Naive thymus-derived CD8-positive, alpha-beta T cell (primary cell): ENCODE measurements at regions of chr16 and their contacts with region 1.

Region 1: DNA sequence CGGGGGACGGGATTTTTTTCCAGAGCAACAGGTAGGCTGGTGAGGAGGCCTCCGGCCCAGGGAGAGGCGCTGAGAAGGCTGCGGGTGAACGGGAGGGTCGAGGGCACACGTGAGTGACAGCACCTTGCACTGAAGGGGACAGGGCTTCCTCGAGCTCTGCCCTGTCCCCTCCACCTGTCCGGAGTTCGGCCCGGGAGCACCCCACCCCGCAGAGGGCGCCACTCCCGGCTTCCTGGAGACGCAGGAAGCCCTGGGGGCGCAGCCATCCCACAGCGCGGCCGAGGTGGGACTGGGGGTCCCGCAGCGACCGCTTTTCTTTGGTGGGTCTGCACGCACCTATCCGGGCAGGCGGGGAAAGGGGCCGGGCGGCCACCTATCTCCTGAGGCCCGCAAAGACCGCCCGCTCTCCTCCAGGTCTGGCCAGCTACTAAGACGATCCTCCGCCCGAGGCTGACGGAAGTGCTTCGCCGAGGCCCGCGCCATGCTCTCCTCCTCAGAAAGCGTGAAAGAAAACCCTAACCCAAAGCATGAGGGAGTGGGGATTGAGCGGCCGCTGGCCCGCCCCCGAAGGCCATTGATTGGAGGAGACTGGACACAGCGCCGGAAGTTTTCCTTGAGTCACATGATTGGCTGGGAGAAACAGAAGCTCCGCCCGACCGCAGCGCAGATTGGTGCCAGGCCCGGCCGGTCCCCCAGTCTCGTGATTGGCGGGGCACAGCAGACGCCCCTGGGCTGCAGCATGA is 34.3 kb downstream of the DDX19A start:
- DNase-seq: peak; percentile 90 to 97 (median 94)
- ATAC-seq: peak; percentile 88 to 92
- H3K4me3 Mint-ChIP-seq: peak overlapping the region; percentile 91 to 99 (median 95)
- H3K27ac Mint-ChIP-seq: peak overlapping the region; percentile 79 to 98 (median 94)
- H3K4me1 Mint-ChIP-seq: peaks cover 6 to 26% (median 18%) of the 10 kb centered on the region in 4 donors
- H3K27me3 Mint-ChIP-seq: no peaks in the 10 kb centered on the region

Region 2: GRCh38 chr16:70269471-70269870 is 111.6 kb before region 1 on chr16:
- POLR2A ChIA-PET with region 1: no interaction called
- DNase-seq: no peak
- ATAC-seq: no peak
- H3K4me3 Mint-ChIP-seq: no peak overlapping the region
- H3K27ac Mint-ChIP-seq: peak overlapping the region in 1 of 10 donors; percentile 59
- H3K4me1 Mint-ChIP-seq: peaks cover 0 to 3% (median under 1%) of the 10 kb centered on the region in 4 donors
- H3K27me3 Mint-ChIP-seq: no peaks in the 10 kb centered on the region

Region 3: DNA sequence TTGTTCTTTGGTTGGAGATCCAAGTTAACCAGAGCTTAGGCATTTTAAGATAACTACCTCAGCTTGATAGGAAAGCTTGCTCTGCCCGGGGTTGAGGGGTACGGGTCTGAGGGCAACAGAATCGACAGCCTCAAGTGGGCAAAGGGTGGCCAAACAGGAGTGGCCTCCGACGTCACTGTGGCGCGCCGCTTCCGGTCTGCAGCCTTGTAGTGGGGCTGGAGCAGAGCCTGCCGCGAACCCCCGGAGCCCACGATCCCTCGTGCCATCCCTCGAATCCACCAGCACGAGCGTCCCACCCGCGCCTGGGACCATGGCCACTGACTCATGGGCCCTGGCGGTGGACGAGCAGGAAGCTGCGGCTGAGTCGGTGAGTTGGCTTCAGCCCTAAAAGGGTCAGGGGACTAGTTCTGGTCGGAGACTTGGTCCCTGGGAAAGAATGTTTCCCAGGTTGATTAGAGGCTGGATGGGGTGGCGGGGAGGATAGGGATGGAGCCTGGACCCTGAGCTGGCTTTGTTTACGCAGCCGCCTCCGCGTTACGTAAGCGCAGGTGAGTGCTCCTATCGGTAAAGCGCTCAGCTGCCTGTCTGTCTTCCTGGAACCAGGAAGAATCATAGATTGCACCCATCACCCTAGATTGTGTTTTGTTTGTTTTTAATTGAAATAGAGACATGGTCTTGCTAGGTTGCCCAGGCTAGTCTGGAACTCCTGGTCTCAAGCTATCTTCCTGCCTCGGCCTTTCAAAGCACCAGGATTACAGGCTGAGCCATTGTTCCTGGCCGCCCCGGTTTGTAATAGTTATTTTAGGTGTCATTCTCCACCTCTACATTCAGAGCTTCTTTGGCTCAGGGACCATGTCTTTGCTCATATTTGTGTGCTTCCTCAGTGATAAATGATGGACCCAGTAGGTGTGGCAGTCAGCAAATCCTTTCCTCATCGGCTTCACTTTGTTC is 81.8 kb before region 1 on chr16 and contains the start of gene DDX19B:
- POLR2A ChIA-PET with region 1: interaction called, 13 read pairs
- DNase-seq: peak; percentile 33 to 76 (median 52)
- ATAC-seq: peak; percentile 86 to 91
- H3K4me3 Mint-ChIP-seq: peak within 1 kb of the TSS; percentile 89 to 98 (median 94)
- H3K27ac Mint-ChIP-seq: peak within 1 kb of the TSS; percentile 97 to 100 (median 99)
- H3K4me1 Mint-ChIP-seq: peaks cover 17 to 45% (median 42%) of the 10 kb centered on the region in 4 donors
- H3K27me3 Mint-ChIP-seq: no peaks in the 10 kb centered on the region
- polyA plus RNA-seq, gene DDX19B: 34.5 to 48.2 (median 40.0) TPM

Region 4: DNA sequence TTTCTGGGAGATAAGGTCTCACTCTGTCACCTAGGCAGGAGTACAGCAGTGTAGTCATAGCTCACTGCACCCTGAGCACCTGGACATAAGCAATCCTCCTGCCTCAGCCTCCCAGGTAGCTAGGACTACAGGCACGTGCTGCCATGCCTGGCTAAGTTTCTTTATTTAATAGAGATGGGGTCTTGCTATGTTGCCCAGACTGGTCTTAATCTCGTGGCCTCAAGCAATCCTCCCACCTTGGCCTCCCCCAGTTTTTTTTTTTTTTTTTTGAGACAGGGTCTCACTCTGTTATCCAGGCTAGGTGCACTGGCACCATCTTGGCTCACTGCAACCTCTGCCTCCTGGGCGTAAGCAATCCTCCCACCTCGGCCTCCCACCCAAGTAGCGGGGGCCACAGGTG is 60.9 kb before region 1 on chr16:
- POLR2A ChIA-PET with region 1: no interaction called
- DNase-seq: no peak
- ATAC-seq: no peak
- H3K4me3 Mint-ChIP-seq: no peak overlapping the region
- H3K27ac Mint-ChIP-seq: no peak overlapping the region
- H3K4me1 Mint-ChIP-seq: no peaks in the 10 kb centered on the region
- H3K27me3 Mint-ChIP-seq: no peaks in the 10 kb centered on the region

Region 5: GRCh38 chr16:70370924-70371323 is 10.1 kb before region 1 on chr16:
- POLR2A ChIA-PET with region 1: interaction called, 23 read pairs
- DNase-seq: no peak
- ATAC-seq: no peak
- H3K4me3 Mint-ChIP-seq: peak overlapping the region in 1 of 10 donors; percentile 7
- H3K27ac Mint-ChIP-seq: peak overlapping the region in 8 of 10 donors; percentile 34 to 89 (median 66)
- H3K4me1 Mint-ChIP-seq: peaks cover 4 to 34% (median 7%) of the 10 kb centered on the region in 4 donors
- H3K27me3 Mint-ChIP-seq: no peaks in the 10 kb centered on the region

Region 6: GRCh38 chr16:70416748-70417616 is 36.0 kb after region 1 on chr16:
- POLR2A ChIA-PET with region 1: interaction called, 22 read pairs
- DNase-seq: no peak
- ATAC-seq: no peak
- H3K4me3 Mint-ChIP-seq: peak overlapping the region in 8 of 10 donors; percentile 42 to 79 (median 64)
- H3K27ac Mint-ChIP-seq: peak overlapping the region; percentile 83 to 95 (median 91)
- H3K4me1 Mint-ChIP-seq: peaks cover 29 to 65% (median 60%) of the 10 kb centered on the region in 4 donors
- H3K27me3 Mint-ChIP-seq: no peaks in the 10 kb centered on the region

Region 7: GRCh38 chr16:70438969-70439862 is 58.2 kb after region 1 on chr16 and contains the start of gene ST3GAL2:
- POLR2A ChIA-PET with region 1: interaction called, 67 read pairs
- DNase-seq: peak; percentile 87 to 97 (median 91)
- ATAC-seq: peak; percentile 91 to 95
- H3K4me3 Mint-ChIP-seq: peak within 1 kb of the TSS; percentile 89 to 98 (median 97)
- H3K27ac Mint-ChIP-seq: peak within 1 kb of the TSS; percentile 83 to 97 (median 96)
- H3K4me1 Mint-ChIP-seq: peaks cover 17 to 49% (median 35%) of the 10 kb centered on the region in 4 donors
- H3K27me3 Mint-ChIP-seq: no peaks in the 10 kb centered on the region
- polyA plus RNA-seq, gene ST3GAL2: 14.6 to 23.4 (median 16.5) TPM

Region 8: GRCh38 chr16:70523076-70523742 is 142.2 kb after region 1 on chr16 and contains the start of gene COG4:
- POLR2A ChIA-PET with region 1: interaction called, 38 read pairs
- DNase-seq: peak; percentile 84 to 95 (median 90)
- ATAC-seq: peak; percentile 80 to 81
- H3K4me3 Mint-ChIP-seq: peak within 1 kb of the TSS; percentile 94 to 100 (median 98)
- H3K27ac Mint-ChIP-seq: peak within 1 kb of the TSS; percentile 96 to 100 (median 99)
- H3K4me1 Mint-ChIP-seq: peaks cover 19 to 69% (median 57%) of the 10 kb centered on the region in 4 donors
- H3K27me3 Mint-ChIP-seq: no peaks in the 10 kb centered on the region
- polyA plus RNA-seq, gene COG4: 52.4 to 58.6 (median 52.8) TPM